PC-3 (cell line): ENCODE measurements at regions of chr2 and their contacts with region 1.

Region 1: GRCh38 chr2:98649135-98649991 is 41.0 kb downstream of the UNC50 start:
- DNase-seq: peak; percentile 90
- ATAC-seq: peak; percentile 91
- H3K4me3 ChIP-seq: no peak overlapping the region
- H3K27ac ChIP-seq: no peak overlapping the region
- H3K4me1 ChIP-seq: no peaks in the 10 kb centered on the region
- H3K27me3 ChIP-seq: no peaks in the 10 kb centered on the region
- CTCF ChIP-seq: peak; percentile 97

Region 2: GRCh38 chr2:98560256-98560771 is 89.0 kb before region 1 on chr2:
- CTCF ChIA-PET with region 1: no interaction called
- POLR2A ChIA-PET with region 1: no interaction called
- intact Hi-C with region 1: no loop called
- DNase-seq: peak; percentile 90
- ATAC-seq: peak; percentile 99
- H3K4me3 ChIP-seq: no peak overlapping the region
- H3K27ac ChIP-seq: peak overlapping the region; percentile 76
- H3K4me1 ChIP-seq: peaks cover 16% of the 10 kb centered on the region
- H3K27me3 ChIP-seq: no peaks in the 10 kb centered on the region
- CTCF ChIP-seq: no peak

Region 3: DNA sequence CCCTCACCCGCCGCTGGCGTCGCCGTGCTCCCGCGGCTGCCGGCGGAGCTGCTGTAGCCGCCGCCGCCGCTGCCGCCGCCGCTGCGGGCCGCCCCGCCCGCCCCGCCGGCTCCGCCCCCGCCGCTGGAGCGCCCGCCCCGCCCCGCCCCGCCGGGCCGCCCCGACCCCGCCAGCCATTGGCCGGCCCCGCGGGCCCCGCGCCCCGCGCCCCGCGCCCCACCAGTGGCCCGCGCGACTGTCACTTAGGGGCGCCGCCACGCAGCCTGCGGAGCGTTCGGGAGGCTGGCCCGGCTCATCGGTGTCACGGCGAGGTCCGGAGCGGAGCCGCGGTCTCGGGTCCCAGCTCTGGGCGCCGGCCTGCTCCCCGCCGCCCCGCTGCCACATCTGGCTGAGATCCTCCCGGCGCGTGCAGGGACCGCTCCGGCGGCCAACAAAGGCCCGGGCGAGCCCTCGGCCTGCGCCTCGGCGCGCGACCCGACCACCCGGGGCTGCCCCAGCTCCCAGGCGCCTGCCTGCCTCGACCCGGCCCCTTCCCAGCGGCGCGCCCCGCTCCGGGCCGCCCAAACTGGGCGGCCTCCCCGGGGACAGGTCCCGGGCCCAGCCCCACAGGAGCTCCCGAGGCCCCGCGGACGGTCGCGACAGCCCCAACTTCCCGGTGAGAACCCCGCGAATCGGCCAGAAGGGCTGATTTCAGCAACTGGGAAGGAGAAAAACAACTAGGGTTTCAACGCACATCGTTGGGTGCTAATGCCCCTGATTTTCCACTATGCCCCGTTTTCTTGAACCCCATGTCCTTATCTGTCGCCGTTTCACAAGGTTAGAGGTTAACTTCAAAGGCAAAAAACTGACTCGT is 81.9 kb after region 1 on chr2 and contains the start of gene MGAT4A:
- CTCF ChIA-PET with region 1: no interaction called
- POLR2A ChIA-PET with region 1: interaction called, 4 read pairs
- intact Hi-C with region 1: loop called (anchors 2 kb)
- DNase-seq: peak; percentile 59
- ATAC-seq: peak; percentile 75
- H3K4me3 ChIP-seq: peak within 1 kb of the TSS; percentile 77
- H3K27ac ChIP-seq: no peak within 1 kb of the TSS
- H3K4me1 ChIP-seq: peaks cover 28% of the 10 kb centered on the region
- H3K27me3 ChIP-seq: no peaks in the 10 kb centered on the region
- CTCF ChIP-seq: no peak
- total RNA-seq, gene MGAT4A: 1.7 and 6.1 TPM in 2 replicates

Region 4: DNA sequence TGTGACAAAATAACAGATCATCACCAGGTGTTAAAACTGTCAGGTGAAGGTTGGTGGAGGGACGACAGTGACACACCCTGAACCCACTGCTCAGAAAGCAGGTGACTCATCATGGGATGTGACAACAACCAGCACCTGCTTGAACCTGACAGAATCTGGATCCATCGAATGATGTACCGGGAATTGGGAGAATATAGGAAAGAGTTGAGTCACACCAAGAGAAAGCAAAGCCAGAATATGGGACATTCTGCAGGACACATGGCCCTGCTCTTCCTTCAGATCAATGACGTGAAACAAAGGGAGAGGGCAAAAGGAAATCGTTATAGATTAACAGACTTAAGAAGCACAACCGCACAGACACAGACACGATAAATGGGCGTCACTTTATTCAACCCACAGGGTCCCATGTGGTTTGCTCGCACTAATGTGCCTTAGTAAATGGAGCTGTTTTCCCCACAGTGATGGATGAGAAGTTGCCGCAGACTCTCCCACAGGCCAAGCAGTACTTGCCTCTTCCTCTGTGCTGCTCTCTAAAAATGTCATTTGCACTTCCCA is 186.5 kb after region 1 on chr2:
- CTCF ChIA-PET with region 1: interaction called, 18 read pairs
- POLR2A ChIA-PET with region 1: no interaction called
- intact Hi-C with region 1: loop called (anchors 1 kb)
- DNase-seq: peak; percentile 39
- ATAC-seq: no peak
- H3K4me3 ChIP-seq: no peak overlapping the region
- H3K27ac ChIP-seq: no peak overlapping the region
- H3K4me1 ChIP-seq: 0 out of 2 replicates have a peak, but pooled peaks cover 5% of the 10 kb centered on the region
- H3K27me3 ChIP-seq: no peaks in the 10 kb centered on the region
- CTCF ChIP-seq: no peak

Region 5: GRCh38 chr2:98909317-98910211 is 260.2 kb after region 1 on chr2:
- CTCF ChIA-PET with region 1: no interaction called
- POLR2A ChIA-PET with region 1: no interaction called
- intact Hi-C with region 1: loop called (anchors 10 kb)
- DNase-seq: peak; percentile 87
- ATAC-seq: peak; percentile 67
- H3K4me3 ChIP-seq: peak overlapping the region; percentile 44; the same call in 1 of the 2 replicates
- H3K27ac ChIP-seq: peak overlapping the region; percentile 81
- H3K4me1 ChIP-seq: peaks cover 56% of the 10 kb centered on the region
- H3K27me3 ChIP-seq: no peaks in the 10 kb centered on the region
- CTCF ChIP-seq: no peak

Region 6: GRCh38 chr2:99066075-99066958 is 417.0 kb after region 1 on chr2:
- CTCF ChIA-PET with region 1: interaction called, 4 read pairs
- POLR2A ChIA-PET with region 1: no interaction called
- intact Hi-C with region 1: loop called (anchors 1 kb)
- DNase-seq: peak; percentile 78
- ATAC-seq: peak; percentile 98
- H3K4me3 ChIP-seq: no peak overlapping the region
- H3K27ac ChIP-seq: no peak overlapping the region
- H3K4me1 ChIP-seq: no peaks in the 10 kb centered on the region
- H3K27me3 ChIP-seq: no peaks in the 10 kb centered on the region
- CTCF ChIP-seq: peak; percentile 82